Gastrocnemius medialis (tissue), 4 donors: ENCODE measurements at regions of chr2 and their contacts with region 1.

Region 1: DNA sequence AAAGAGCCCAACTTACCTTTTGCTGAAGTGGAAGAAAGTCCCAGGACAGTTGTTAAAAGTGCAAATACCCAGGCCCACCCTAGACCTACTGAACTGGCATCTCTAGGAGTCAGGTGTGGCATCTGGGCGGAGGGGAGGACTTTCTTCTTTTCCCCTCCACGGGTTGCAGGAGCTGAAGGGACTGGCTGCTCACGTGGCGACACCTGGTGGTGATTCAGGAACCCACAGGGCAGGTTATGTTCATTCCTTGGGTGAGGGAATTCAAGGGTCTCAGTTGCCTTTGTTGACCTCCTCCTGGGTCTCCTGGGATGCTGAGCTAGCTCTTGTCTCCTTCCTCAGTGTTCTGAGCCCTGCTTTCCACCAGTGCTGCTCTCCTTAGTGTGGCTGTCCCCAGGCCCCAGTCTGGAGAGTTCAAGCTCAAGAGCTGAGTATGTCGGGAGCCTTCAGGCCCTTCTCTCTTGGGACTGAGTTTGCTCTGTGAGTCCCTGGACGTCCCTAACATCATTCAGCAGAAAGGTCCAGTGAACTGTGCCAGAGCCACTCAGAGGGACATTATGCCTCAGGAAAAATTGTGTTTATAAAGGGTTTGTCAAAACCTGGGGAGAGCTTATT is 56.9 kb downstream of the DYSF start:
- DNase-seq: peak; percentile 57 to 71
- ATAC-seq: peak; percentile 68 to 85
- H3K4me3 ChIP-seq: no peak overlapping the region
- H3K27ac ChIP-seq: peak overlapping the region in 3 of 4 donors; percentile 3 to 33 (median 26)
- H3K4me1 ChIP-seq: peaks cover 8 to 12% of the 10 kb centered on the region in 2 donors
- H3K27me3 ChIP-seq: no peaks in the 10 kb centered on the region
- CTCF ChIP-seq: peak; percentile 87 to 97 (median 93)
- POLR2A ChIP-seq: no peak

Region 2: DNA sequence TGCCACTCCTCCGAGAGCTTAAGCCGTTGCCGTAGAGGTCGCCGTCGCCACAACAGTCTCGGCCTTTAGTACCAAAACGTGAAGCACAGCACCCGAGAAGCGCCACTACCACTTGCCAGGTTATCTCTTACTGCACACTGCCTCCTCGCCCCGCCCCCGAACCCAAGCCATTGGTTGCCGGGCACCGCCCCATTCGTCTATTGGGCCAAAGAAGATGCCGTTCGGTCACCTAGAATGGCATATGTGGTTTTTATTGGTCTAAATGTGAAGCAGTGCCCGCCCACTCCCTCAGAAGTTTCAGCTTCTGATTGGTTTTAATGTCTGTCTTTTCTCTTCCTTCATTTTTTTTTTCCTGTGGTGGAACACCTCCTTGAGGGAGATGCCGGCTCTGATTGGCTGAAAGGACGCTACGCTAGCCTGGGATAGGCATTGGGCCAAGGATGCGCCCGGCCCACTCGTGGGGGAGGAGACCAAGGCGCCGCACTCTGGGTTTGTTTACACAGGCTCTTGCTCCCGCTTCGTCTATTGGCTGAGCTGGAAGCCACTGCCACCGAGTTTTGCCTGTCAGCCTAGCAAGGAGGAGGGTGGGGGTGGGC is 283.2 kb before region 1 on chr2 and contains the start of gene PAIP2B:
- in situ Hi-C with region 1: loop called in 1 of 4 experiments (anchors 25 kb)
- intact Hi-C with region 1: loop called (anchors 5 kb)
- DNase-seq: peak; percentile 99 to 100
- ATAC-seq: peak; percentile 92 to 94
- H3K4me3 ChIP-seq: peak within 1 kb of the TSS; percentile 83 to 93 (median 90)
- H3K27ac ChIP-seq: peak within 1 kb of the TSS; percentile 96 to 98 (median 98)
- H3K4me1 ChIP-seq: peaks cover 19% of the 10 kb centered on the region in 2 donors
- H3K27me3 ChIP-seq: no peaks in the 10 kb centered on the region
- CTCF ChIP-seq: no peak
- POLR2A ChIP-seq: peak; percentile 95 to 97
- total RNA-seq, gene PAIP2B: 14.6 to 32.6 (median 15.9) TPM

Region 3: GRCh38 chr2:71306762-71307161 is 203.5 kb before region 1 on chr2:
- in situ Hi-C with region 1: loop called in 3 of 4 experiments (anchors 5 to 10 kb)
- intact Hi-C with region 1: no loop called
- DNase-seq: peak in 1 of 2 donors; percentile 19
- ATAC-seq: peak in 1 of 2 donors; percentile 72
- H3K4me3 ChIP-seq: no peak overlapping the region
- H3K27ac ChIP-seq: peak overlapping the region in 3 of 4 donors; percentile 7 to 54 (median 36)
- H3K4me1 ChIP-seq: peaks cover 8 to 16% of the 10 kb centered on the region in 2 donors
- H3K27me3 ChIP-seq: no peaks in the 10 kb centered on the region
- CTCF ChIP-seq: no peak
- POLR2A ChIP-seq: no peak

Region 4: DNA sequence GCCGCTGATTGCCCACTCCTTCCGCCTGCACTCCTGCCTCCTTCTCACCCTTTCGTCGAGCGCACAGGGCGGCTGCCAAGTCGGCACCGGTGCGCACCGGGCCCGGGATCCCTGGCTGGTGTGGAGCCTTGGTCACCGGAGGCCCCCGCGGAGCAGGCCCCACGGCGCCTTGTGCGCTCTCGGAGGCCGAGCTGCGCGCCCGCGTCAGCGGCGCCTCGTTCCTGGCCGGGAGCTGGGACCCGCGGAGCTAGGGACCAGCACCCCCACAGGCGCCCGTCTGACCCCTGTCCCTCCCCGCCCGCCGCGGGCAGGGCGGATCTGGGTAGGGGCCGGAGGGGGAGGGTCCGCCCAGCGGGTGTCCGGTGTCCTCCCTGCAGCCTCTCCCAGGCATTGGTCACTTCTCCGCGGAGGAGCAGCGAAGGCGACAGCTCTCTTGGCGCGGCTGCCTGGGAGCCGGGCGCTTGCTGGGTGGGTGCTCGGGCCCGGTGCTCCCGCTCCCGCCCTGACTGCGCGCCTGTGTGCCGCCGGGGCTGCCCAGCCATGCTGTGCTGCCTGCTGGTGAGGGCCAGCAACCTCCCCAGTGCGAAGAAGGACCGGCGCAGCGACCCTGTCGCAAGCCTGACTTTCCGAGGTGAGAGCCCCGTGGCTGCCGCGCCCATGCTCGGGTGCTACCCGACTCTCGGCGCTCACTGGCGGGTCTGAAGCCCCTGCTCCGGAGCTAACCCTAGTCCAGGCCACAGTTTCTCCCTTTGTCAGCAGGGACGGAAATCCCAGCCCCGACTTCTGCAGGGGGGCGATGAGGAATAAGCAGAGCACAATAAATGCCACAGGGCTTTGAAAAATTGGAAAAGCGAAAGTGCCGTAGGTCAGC is 43.8 kb before region 1 on chr2:
- in situ Hi-C with region 1: loop called in 3 of 4 experiments (anchors 5 to 10 kb)
- intact Hi-C with region 1: no loop called
- DNase-seq: peak; percentile 65 to 82
- ATAC-seq: peak; percentile 67 to 72
- H3K4me3 ChIP-seq: peak overlapping the region; percentile 68 to 88 (median 72)
- H3K27ac ChIP-seq: peak overlapping the region; percentile 77 to 99 (median 86)
- H3K4me1 ChIP-seq: peaks cover 68 to 79% of the 10 kb centered on the region in 2 donors
- H3K27me3 ChIP-seq: no peaks in the 10 kb centered on the region
- CTCF ChIP-seq: no peak
- POLR2A ChIP-seq: peak; percentile 52 to 65

Region 5: GRCh38 chr2:71637168-71637567 is 126.9 kb after region 1 on chr2:
- in situ Hi-C with region 1: no loop called
- intact Hi-C with region 1: no loop called
- DNase-seq: no peak
- ATAC-seq: no peak
- H3K4me3 ChIP-seq: no peak overlapping the region
- H3K27ac ChIP-seq: no peak overlapping the region
- H3K4me1 ChIP-seq: peaks cover 12 to 13% of the 10 kb centered on the region in 2 donors
- H3K27me3 ChIP-seq: no peaks in the 10 kb centered on the region
- CTCF ChIP-seq: no peak
- POLR2A ChIP-seq: no peak

Region 6: GRCh38 chr2:72150157-72150865 is 640.0 kb after region 1 on chr2:
- in situ Hi-C with region 1: no loop called
- intact Hi-C with region 1: no loop called
- DNase-seq: peak; percentile 61 to 69
- ATAC-seq: peak; percentile 78 to 84
- H3K4me3 ChIP-seq: peak overlapping the region in 3 of 4 donors; percentile 53 to 66 (median 55)
- H3K27ac ChIP-seq: no peak overlapping the region
- H3K4me1 ChIP-seq: peaks cover 38 to 49% of the 10 kb centered on the region in 2 donors
- H3K27me3 ChIP-seq: peaks cover 39 to 43% (median 41%) of the 10 kb centered on the region in 3 donors
- CTCF ChIP-seq: peak; percentile 82 to 92 (median 89)
- POLR2A ChIP-seq: no peak